ENCODE measurements at regions of chr12 and their contacts with region 1.

Region 1: DNA sequence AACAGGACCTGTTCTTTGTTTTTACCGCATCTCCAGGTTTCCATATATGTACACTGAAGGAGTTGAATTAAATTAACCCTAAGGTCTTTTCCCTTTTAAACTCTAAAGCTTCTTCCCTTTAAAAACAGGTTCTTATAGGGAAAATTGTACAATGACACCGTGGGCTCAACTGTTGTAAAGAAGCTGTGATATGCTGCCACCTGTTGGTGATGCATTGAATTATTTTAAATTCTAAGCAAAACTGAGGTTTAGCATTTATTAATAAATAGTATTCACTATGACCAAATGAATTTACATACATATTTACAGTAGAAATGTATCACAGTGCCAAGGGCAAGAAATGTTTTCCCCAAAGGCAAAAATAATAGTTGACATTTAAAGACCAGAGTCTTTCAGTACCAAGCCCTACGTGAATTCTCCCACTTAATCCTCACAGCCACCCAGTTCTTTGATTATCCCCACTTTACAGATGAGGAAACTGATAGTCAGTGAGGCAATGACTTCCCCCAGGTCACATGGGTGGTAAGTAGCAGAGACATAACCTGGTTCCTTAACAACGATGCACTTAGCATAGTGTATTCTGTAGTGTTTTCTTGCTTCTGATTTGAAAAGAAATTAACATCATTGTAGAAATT is 35.7 kb upstream of the TMEM263 start:
- DNase-seq: no peak
- ATAC-seq: peak; percentile 52

Region 2: DNA sequence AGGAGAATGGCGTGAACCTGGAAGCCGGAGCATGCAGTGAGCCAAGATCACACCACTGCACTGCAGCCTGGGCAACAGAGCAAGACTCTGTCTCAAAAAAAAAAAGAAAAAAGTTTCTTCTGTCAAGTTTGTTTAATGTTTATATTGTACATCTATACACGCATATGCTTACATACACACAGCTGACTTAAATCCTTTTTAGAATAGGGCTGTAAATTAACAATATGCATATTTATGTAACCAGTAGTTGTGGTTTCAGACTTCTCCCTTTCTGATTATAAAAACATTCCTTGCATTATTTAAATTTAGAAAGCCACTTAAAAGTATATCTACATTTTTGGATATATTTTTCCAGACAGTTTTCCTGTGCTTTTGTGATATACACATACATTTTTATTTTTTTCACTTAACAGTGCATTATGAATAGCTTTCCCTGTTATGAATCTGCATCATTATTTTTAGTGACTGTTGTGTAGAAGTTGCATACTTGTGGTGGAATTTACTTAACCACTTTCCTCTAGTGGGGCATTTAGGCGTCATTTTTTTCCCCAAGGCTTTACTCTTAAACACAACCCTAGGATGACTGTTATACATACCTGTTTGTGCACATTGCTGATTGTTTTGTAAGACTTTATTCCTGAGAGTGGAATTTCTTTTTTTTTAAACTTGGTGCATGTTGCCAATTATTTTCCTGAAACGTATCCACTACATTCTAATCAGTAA is 533.1 kb before region 1 on chr12:
- intact Hi-C with region 1: loop called (anchors 5 kb)
- DNase-seq: no peak
- ATAC-seq: no peak

Region 3: GRCh38 chr12:106629797-106630659 is 290.0 kb before region 1 on chr12:
- intact Hi-C with region 1: no loop called
- DNase-seq: no peak
- ATAC-seq: no peak

Measured in Right ventricle myocardium superior (tissue), 1 donor.